CD4-positive, alpha-beta T cell (primary cell): ENCODE measurements at regions of chr14 and their contacts with region 1.

Region 1: GRCh38 chr14:57317316-57317715 is 48.5 kb downstream of the AP5M1 start:
- DNase-seq: peak; percentile 50 to 85 (median 64)
- ATAC-seq: peak; percentile 57
- H3K4me3 ChIP-seq: no peak overlapping the region
- H3K4me3 Mint-ChIP-seq: no peak overlapping the region
- H3K27ac ChIP-seq: no peak overlapping the region
- H3K27ac Mint-ChIP-seq: no peak overlapping the region
- H3K4me1 ChIP-seq: no peaks in the 10 kb centered on the region
- H3K4me1 Mint-ChIP-seq: no peaks in the 10 kb centered on the region
- H3K27me3 ChIP-seq: peaks cover 0 to 19% of the 10 kb centered on the region in 2 experiments
- H3K27me3 Mint-ChIP-seq: peaks cover 19% of the 10 kb centered on the region
- CTCF ChIP-seq: peak; percentile 91

Region 2: GRCh38 chr14:56491299-56492285 is 825.7 kb before region 1 on chr14:
- CTCF ChIA-PET with region 1: interaction called, 8 read pairs
- POLR2A ChIA-PET with region 1: no interaction called
- intact Hi-C with region 1: loop called (anchors 1 kb)
- DNase-seq: peak in 6 of 14 experiments; percentile 3 to 60 (median 31)
- ATAC-seq: peak; percentile 48
- H3K4me3 ChIP-seq: no peak overlapping the region
- H3K4me3 Mint-ChIP-seq: no peak overlapping the region
- H3K27ac ChIP-seq: no peak overlapping the region
- H3K27ac Mint-ChIP-seq: no peak overlapping the region
- H3K4me1 ChIP-seq: peaks cover 5% of the 10 kb centered on the region
- H3K4me1 Mint-ChIP-seq: peaks cover 11% of the 10 kb centered on the region
- H3K27me3 ChIP-seq: no peaks in the 10 kb centered on the region
- H3K27me3 Mint-ChIP-seq: peaks cover 10% of the 10 kb centered on the region
- CTCF ChIP-seq: peak; percentile 55

Region 3: DNA sequence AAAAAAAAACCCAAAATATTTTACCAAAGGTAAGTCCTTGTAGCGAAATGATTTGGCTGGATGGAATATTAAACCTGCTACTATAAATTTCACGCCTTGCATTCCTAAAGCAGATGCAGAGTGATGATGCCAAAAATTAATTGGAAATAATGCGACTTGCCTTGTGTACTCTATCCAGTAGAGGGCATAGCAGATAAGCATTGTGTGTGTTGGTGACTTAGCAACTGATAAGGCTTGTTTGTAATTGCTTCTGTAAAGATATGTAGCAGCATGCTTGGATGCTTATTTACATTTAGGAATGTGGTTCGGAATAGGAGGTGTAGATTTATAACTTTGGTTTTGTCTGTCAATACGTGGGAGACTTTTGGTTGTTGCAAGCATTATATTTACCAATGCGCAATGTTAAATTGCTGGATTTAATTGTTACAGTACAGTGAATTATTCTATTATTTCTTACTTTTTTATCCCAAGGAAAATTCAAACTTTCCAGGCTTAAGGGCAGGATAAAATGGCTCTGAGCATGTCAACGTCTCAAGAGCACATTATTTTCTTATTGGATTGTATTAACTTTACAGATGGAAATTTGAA is 657.3 kb before region 1 on chr14:
- CTCF ChIA-PET with region 1: interaction called, 4 read pairs
- POLR2A ChIA-PET with region 1: no interaction called
- intact Hi-C with region 1: loop called in 1 of 2 experiments (anchors 10 kb)
- DNase-seq: peak in 2 of 14 experiments; percentile 8 to 10
- ATAC-seq: no peak
- H3K4me3 ChIP-seq: no peak overlapping the region
- H3K4me3 Mint-ChIP-seq: no peak overlapping the region
- H3K27ac ChIP-seq: no peak overlapping the region
- H3K27ac Mint-ChIP-seq: no peak overlapping the region
- H3K4me1 ChIP-seq: no peaks in the 10 kb centered on the region
- H3K4me1 Mint-ChIP-seq: no peaks in the 10 kb centered on the region
- H3K27me3 ChIP-seq: no peaks in the 10 kb centered on the region
- H3K27me3 Mint-ChIP-seq: no peaks in the 10 kb centered on the region
- CTCF ChIP-seq: peak; percentile 27

Region 4: DNA sequence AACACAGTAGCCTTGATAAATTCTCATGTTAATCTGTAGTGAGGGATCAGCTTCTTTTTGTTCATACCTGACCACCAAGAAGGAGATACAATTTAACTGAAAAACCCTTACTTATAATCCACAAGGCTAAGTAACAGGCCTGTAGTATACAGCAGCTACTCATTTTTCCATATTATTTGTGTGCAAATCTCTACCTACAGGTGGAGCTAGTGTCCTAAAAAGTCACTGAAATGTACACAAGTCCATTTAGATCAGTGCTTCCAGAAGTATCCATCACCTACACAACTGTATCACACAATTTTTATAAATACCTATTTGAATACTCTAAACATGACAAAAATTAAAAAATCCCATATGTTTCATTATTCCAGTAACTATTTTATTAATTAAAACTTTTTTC is 375.4 kb after region 1 on chr14:
- CTCF ChIA-PET with region 1: no interaction called
- POLR2A ChIA-PET with region 1: no interaction called
- intact Hi-C with region 1: no loop called
- DNase-seq: no peak
- ATAC-seq: no peak
- H3K4me3 ChIP-seq: no peak overlapping the region
- H3K4me3 Mint-ChIP-seq: no peak overlapping the region
- H3K27ac ChIP-seq: no peak overlapping the region
- H3K27ac Mint-ChIP-seq: no peak overlapping the region
- H3K4me1 ChIP-seq: no peaks in the 10 kb centered on the region
- H3K4me1 Mint-ChIP-seq: no peaks in the 10 kb centered on the region
- H3K27me3 ChIP-seq: no peaks in the 10 kb centered on the region
- H3K27me3 Mint-ChIP-seq: no peaks in the 10 kb centered on the region
- CTCF ChIP-seq: no peak